Activated CD4-positive, alpha-beta T cell treated with anti-CD3 and anti-CD28 coated beads for 36 hours (primary cell): ENCODE measurements at regions of chr14 and their contacts with region 1.

Region 1: DNA sequence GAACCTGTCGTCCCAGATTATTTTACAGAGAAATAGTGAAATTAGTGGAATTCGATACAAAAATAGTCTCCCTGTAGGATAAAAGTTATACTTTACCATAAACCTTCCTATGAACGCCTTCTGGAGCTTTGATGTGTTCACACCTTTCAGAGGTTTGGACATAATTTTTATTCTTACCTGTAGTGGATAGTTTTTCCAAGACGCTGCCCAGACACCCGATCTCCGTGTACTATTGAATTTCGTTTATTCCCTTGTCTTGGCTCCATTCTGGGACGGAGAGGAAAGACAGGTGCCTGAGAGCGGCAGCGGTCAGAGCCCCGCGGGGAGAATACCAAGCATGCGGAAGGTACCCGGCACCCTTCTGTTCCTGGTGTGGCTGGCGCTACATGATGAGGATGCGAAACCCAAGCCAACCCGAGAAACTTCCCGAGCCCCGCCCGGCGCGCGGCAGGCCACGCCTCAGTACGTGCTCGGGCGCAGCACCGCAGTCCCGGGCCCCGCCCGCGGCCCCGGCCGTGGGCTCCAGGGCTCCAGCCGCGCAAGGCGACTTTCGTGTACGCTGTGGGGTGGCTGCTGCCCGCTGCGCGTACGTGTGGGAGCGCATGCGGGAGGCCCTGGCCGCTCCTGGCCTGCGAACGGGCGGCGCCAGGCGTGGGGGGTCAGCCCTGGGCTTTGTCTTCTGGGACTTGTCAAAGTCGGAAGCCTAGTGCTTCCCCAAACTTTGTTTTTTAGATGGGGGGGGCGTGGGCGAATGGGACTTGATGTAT is 11.3 kb upstream of the SNAPC1 start:
- DNase-seq: peak; percentile 93
- ATAC-seq: peak; percentile 92
- H3K4me3 Mint-ChIP-seq: peak overlapping the region; percentile 97
- H3K27ac Mint-ChIP-seq: peak overlapping the region; percentile 89
- H3K4me1 Mint-ChIP-seq: peaks cover 22% of the 10 kb centered on the region
- H3K27me3 Mint-ChIP-seq: peaks cover 2% of the 10 kb centered on the region

Region 2: GRCh38 chr14:61561657-61562276 is 189.1 kb before region 1 on chr14:
- CTCF ChIA-PET with region 1: no interaction called
- POLR2A ChIA-PET with region 1: no interaction called
- intact Hi-C with region 1: no loop called
- DNase-seq: no peak
- ATAC-seq: no peak
- H3K4me3 Mint-ChIP-seq: no peak overlapping the region
- H3K27ac Mint-ChIP-seq: peak overlapping the region; percentile 81
- H3K4me1 Mint-ChIP-seq: peaks cover 62% of the 10 kb centered on the region
- H3K27me3 Mint-ChIP-seq: no peaks in the 10 kb centered on the region

Region 3: GRCh38 chr14:61737915-61738314 is 13.0 kb before region 1 on chr14:
- CTCF ChIA-PET with region 1: interaction called, 11 read pairs
- POLR2A ChIA-PET with region 1: no interaction called
- intact Hi-C with region 1: loop called in 1 of 2 experiments (anchors 2 kb)
- DNase-seq: no peak
- ATAC-seq: no peak
- H3K4me3 Mint-ChIP-seq: no peak overlapping the region
- H3K27ac Mint-ChIP-seq: peak overlapping the region; percentile 34
- H3K4me1 Mint-ChIP-seq: peaks cover 12% of the 10 kb centered on the region
- H3K27me3 Mint-ChIP-seq: no peaks in the 10 kb centered on the region

Region 4: DNA sequence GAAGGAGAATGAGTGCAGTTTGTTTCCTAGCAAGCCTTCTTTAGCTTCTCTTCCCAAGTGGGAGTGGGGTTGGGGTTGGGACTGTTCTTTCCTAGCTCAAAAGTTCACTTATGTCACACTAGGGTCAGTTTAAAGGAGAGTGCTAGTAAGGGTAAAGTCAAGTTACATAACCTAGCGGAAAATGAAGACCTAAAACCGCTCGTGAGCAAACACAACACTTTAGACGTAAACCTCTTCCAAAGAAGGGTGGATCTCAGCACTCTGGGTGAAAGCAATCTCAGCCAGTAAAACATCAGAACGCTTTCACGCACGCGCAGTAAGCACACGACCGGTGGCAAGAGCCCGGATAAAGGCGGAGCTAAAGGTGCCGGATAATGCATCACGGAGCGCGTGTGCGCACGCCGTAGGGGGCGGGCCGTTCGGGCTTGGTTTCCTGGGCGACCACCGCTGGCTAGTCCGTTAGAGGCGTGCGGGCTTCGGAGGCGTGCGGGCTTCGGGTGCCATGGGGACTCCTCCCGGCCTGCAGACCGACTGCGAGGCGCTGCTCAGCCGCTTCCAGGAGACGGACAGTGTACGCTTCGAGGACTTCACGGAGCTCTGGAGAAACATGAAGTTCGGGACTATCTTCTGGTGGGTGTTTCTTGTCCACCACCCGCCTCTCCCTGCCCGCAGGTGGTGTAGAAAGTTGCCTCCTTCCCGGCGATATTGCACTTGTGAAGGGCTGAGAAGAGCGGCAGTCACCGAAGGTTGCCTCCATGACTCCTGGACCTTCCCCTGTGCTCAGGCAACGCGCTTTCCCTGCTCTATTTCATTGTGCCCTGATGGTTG is 11.3 kb after region 1 on chr14 and contains the start of gene SNAPC1:
- CTCF ChIA-PET with region 1: interaction called, 11 read pairs
- POLR2A ChIA-PET with region 1: interaction called, 9 read pairs
- intact Hi-C with region 1: loop called in 1 of 2 experiments (anchors 1 kb)
- DNase-seq: peak; percentile 98
- ATAC-seq: peak; percentile 98
- H3K4me3 Mint-ChIP-seq: peak within 1 kb of the TSS; percentile 95
- H3K27ac Mint-ChIP-seq: peak within 1 kb of the TSS; percentile 96
- H3K4me1 Mint-ChIP-seq: peaks cover 35% of the 10 kb centered on the region
- H3K27me3 Mint-ChIP-seq: no peaks in the 10 kb centered on the region
- total RNA-seq, gene SNAPC1: 10.5 to 11.2 TPM

Region 5: GRCh38 chr14:62015945-62016344 is 265.1 kb after region 1 on chr14:
- CTCF ChIA-PET with region 1: no interaction called
- POLR2A ChIA-PET with region 1: no interaction called
- intact Hi-C with region 1: no loop called
- DNase-seq: no peak
- ATAC-seq: peak; percentile 42
- H3K4me3 Mint-ChIP-seq: no peak overlapping the region
- H3K27ac Mint-ChIP-seq: no peak overlapping the region
- H3K4me1 Mint-ChIP-seq: no peaks in the 10 kb centered on the region
- H3K27me3 Mint-ChIP-seq: peaks cover 19% of the 10 kb centered on the region